GM12878 (cell line): ENCODE measurements at regions of chr5 and their contacts with region 1.

Region 1: DNA sequence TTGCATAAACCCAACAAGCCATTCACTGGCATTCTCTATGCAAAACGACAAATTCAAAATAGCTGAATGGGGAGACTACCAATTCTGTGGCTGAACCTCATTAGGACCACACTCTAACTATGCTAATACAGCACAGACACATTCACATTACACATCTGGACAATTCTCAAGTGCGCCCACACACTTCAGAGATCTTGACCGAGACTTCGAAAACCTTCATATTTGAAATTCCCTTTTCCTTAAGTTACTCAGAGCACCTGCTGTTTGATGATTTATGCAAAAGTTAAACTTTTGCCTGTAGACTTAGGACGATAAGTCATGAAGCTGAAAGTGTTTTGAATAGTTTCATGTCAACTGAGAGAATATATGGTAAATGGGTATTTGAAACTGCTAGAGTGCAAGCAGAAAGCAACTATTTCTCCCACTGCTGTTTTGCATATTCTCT is 111.9 kb downstream of the FBN2 start:
- DNase-seq: peak; percentile 50
- ATAC-seq: peak; percentile 93
- H3K4me3 ChIP-seq: no peak overlapping the region
- H3K27ac ChIP-seq: no peak overlapping the region
- H3K4me1 ChIP-seq: no peaks in the 10 kb centered on the region
- H3K27me3 ChIP-seq: no peaks in the 10 kb centered on the region
- CTCF ChIP-seq: no peak
- EP300 ChIP-seq: no peak
- POLR2A ChIP-seq: no peak
- RAD21 ChIP-seq: no peak

Region 2: GRCh38 chr5:128409166-128409800 is 16.8 kb before region 1 on chr5:
- CTCF ChIA-PET with region 1: interaction called, 8 read pairs
- POLR2A ChIA-PET with region 1: interaction called, 16 read pairs
- RAD21 ChIA-PET with region 1: interaction called, 31 read pairs
- SMC1A ChIA-PET with region 1: interaction called, 92 read pairs
- in situ Hi-C with region 1: no loop called
- intact Hi-C with region 1: no loop called
- DNase-seq: no peak
- ATAC-seq: no peak
- H3K4me3 ChIP-seq: no peak overlapping the region
- H3K27ac ChIP-seq: no peak overlapping the region
- H3K4me1 ChIP-seq: no peaks in the 10 kb centered on the region
- H3K27me3 ChIP-seq: no peaks in the 10 kb centered on the region
- CTCF ChIP-seq: no peak
- EP300 ChIP-seq: no peak
- POLR2A ChIP-seq: no peak
- RAD21 ChIP-seq: no peak

Region 3: DNA sequence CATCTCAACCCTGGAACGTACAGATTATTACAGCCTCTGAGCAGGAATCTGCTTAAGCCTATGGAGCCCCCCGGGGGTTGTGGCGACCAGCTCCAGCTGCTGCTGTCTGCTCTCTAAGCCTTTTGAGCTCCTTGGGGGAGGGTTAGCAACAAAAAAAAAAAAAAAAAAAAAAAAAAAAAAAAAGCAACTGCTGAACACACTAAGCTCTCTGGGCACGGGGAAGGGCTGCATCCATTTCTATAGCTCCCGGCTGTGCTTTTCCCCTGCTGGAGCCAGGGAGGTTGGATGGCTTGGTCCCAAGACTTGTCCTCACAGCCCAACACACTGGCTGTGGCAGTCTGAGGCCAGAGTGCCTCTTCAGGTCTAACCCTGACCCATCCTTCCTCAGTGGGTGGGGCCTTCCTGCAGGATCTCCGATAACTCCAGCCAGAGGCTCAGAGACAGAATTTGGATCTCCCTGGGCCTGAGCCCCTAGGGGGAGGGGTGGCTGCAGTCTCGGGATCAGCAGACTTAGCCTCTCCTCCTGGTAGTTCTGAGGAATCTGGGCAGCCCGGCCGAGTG is 29.8 kb after region 1 on chr5:
- CTCF ChIA-PET with region 1: no interaction called
- POLR2A ChIA-PET with region 1: no interaction called
- RAD21 ChIA-PET with region 1: no interaction called
- SMC1A ChIA-PET with region 1: interaction called, 12 read pairs
- in situ Hi-C with region 1: no loop called
- intact Hi-C with region 1: no loop called
- DNase-seq: no peak
- ATAC-seq: no peak
- H3K4me3 ChIP-seq: no peak overlapping the region
- H3K27ac ChIP-seq: no peak overlapping the region
- H3K4me1 ChIP-seq: no peaks in the 10 kb centered on the region
- H3K27me3 ChIP-seq: no peaks in the 10 kb centered on the region
- CTCF ChIP-seq: no peak
- EP300 ChIP-seq: no peak
- POLR2A ChIP-seq: no peak
- RAD21 ChIP-seq: no peak